ENCODE measurements at regions of chr19 and their contacts with region 1.

Region 1: DNA sequence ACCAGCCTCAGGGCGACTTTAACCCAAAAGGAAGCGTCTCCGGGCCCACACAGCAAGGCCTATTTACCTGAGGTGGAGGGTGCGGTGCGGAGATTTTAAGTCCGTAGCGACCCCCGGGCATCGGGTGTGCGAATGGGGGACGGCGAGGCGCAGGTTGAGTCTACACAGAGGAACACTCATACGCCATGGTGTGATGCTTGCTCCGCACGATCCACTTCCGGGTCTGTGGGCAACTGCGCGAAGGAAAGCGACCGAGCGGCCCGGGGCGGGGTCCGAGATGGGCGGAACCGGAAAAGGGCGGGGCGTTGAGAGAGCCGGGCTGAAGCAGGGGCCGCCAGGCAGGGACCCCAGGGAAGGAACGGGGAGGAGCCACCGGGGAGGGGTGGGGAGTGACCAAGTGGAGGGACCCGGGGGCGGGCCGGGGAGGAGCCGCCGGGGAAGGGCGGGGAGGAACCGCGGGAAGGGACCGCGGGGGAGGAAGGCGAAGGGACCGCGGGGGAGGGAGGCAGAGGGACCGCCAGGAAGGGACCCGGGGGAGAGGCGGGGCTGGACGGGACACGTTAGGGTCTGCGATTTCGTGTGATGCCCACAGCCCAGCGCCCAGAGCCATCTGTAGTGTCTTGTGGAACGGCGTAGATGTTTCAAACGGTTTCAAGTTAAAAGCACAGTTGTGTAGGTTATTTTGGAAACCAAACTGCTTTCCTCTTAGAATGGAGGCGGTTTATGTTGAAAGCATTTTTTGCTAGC is at the start of gene ZNF160:
- DNase-seq: peak; percentile 95 to 99 (median 97)
- ATAC-seq: peak; percentile 99
- H3K4me3 ChIP-seq: peak within 1 kb of the TSS; percentile 99
- H3K4me3 Mint-ChIP-seq: peak within 1 kb of the TSS; percentile 85 to 97 (median 88)
- H3K27ac ChIP-seq: peak within 1 kb of the TSS; percentile 89
- H3K27ac Mint-ChIP-seq: peak within 1 kb of the TSS; percentile 79 to 98 (median 94)
- H3K4me1 ChIP-seq: peaks cover 13 to 15% of the 10 kb centered on the region in 2 donors
- H3K4me1 Mint-ChIP-seq: peaks cover 22 to 37% (median 34%) of the 10 kb centered on the region in 7 donors
- H3K27me3 ChIP-seq: no peaks in the 10 kb centered on the region
- H3K27me3 Mint-ChIP-seq: no peaks in the 10 kb centered on the region
- total RNA-seq, gene ZNF160: 39.1 to 75.3 (median 52.9) TPM

Region 2: DNA sequence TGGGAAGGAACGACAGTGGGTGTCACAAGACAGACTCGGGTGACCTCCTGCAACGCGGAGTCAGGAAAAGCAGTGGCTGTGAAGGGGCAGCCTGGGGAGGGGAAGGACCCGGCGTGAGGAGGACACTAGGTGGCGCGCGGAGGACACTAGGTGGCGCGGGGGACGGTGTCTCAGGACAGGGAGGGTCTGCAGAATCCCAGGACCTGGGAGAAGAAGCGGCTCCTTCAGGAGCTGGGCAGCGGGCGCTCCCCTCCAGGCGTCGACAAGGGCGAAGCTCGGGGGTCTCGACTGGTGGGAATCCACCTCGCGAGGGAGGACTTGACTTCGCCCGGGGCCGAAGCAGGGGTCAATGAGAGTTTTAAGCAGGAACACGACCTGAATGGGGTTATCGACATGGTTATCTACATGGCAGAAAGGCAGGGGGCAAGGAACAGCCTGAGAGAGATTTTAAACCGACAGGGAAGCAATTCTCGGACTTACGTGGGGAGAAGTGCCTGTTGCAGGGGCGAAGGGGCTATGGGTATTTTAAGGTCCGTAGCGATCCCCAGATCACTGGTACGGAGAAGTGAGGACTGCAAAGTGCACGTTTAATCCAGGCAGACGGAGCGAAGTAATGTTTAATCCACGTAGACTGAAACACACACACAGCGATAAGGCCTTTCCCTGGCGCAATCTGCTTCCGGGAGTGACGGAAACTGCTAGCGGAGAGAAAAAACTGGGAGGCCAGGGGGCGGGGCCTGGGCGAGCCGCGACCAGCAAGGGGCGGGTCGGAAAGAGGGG is 963.9 kb before region 1 on chr19 and contains the start of gene ZNF616:
- CTCF ChIA-PET with region 1: no interaction called
- POLR2A ChIA-PET with region 1: no interaction called
- intact Hi-C with region 1: loop called in 1 of 2 experiments (anchors 2 kb)
- DNase-seq: peak; percentile 58 to 97 (median 95)
- ATAC-seq: peak; percentile 74
- H3K4me3 ChIP-seq: peak within 1 kb of the TSS; percentile 99
- H3K4me3 Mint-ChIP-seq: peak within 1 kb of the TSS; percentile 92 to 99 (median 96)
- H3K27ac ChIP-seq: peak within 1 kb of the TSS; percentile 89
- H3K27ac Mint-ChIP-seq: peak within 1 kb of the TSS; percentile 88 to 98 (median 96)
- H3K4me1 ChIP-seq: peaks cover 15 to 18% of the 10 kb centered on the region in 2 donors
- H3K4me1 Mint-ChIP-seq: peaks cover 20 to 44% (median 33%) of the 10 kb centered on the region in 7 donors
- H3K27me3 ChIP-seq: no peaks in the 10 kb centered on the region
- H3K27me3 Mint-ChIP-seq: no peaks in the 10 kb centered on the region
- total RNA-seq, gene ZNF616: 2.8 to 18.5 (median 6.1) TPM

Region 3: DNA sequence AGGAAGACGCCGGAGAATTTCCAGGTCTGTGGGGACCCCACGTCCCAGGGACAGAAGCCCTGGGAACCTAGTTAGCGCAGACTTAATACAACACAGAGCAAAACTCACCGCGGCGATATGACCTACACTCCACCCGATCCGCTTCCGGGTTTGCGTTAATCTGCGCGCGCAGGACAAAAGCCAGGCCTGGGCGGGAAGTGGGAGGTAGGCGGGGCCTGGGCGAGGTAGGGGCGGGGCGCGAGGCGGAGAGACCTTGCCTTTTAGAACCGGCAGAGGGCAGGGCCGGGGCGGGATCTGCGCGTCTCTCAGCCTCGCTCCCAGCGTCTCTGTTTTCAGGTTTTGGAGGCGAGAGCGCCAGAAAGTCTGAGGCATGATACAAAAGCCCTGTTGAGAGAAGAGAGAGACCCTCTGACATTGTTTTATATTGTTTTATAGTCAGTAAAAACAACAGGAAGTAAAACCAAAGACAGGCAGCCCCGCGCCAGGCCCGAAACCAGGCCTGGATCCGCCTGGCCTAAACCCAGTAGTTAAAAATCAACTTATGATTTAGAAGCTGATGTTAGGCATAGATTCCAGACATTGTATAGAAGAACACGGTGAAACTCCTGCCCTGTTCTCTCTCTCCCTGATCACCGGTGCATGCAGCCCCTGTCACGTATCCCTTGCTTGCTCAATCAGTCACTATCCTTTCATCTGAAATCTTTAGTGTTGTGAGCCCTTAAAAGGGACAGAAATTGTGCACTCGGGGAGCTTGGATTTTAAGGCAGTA is 368.3 kb before region 1 on chr19 and contains the start of gene ZNF611:
- CTCF ChIA-PET with region 1: no interaction called
- POLR2A ChIA-PET with region 1: no interaction called
- intact Hi-C with region 1: loop called (anchors 1 to 2 kb)
- DNase-seq: peak; percentile 97 to 100 (median 98)
- ATAC-seq: peak; percentile 98
- H3K4me3 ChIP-seq: peak within 1 kb of the TSS; percentile 99
- H3K4me3 Mint-ChIP-seq: peak within 1 kb of the TSS; percentile 85 to 96 (median 93)
- H3K27ac ChIP-seq: peak within 1 kb of the TSS; percentile 95
- H3K27ac Mint-ChIP-seq: peak within 1 kb of the TSS; percentile 92 to 98 (median 95)
- H3K4me1 ChIP-seq: peaks cover 0 to 8% of the 10 kb centered on the region in 2 donors
- H3K4me1 Mint-ChIP-seq: peaks cover 14 to 32% (median 24%) of the 10 kb centered on the region in 7 donors
- H3K27me3 ChIP-seq: no peaks in the 10 kb centered on the region
- H3K27me3 Mint-ChIP-seq: no peaks in the 10 kb centered on the region
- total RNA-seq, gene ZNF611: 23.4 to 56.0 (median 36.8) TPM

Region 4: GRCh38 chr19:52993323-52994178 is 109.8 kb before region 1 on chr19:
- CTCF ChIA-PET with region 1: no interaction called
- POLR2A ChIA-PET with region 1: no interaction called
- intact Hi-C with region 1: loop called (anchors 1 kb)
- DNase-seq: peak; percentile 49 to 85 (median 81)
- ATAC-seq: peak; percentile 100
- H3K4me3 ChIP-seq: peak overlapping the region; percentile 60
- H3K4me3 Mint-ChIP-seq: peak overlapping the region; percentile 56 to 92 (median 86)
- H3K27ac ChIP-seq: no peak overlapping the region
- H3K27ac Mint-ChIP-seq: peak overlapping the region in 5 of 9 donors; percentile 25 to 83 (median 54)
- H3K4me1 ChIP-seq: peaks cover 0 to 6% of the 10 kb centered on the region in 2 donors
- H3K4me1 Mint-ChIP-seq: peaks cover 8 to 26% (median 14%) of the 10 kb centered on the region in 7 donors
- H3K27me3 ChIP-seq: no peaks in the 10 kb centered on the region
- H3K27me3 Mint-ChIP-seq: peaks cover 0 to 23% (median 14%) of the 10 kb centered on the region in 5 donors

Region 5: GRCh38 chr19:53057904-53058580 is 45.3 kb before region 1 on chr19:
- CTCF ChIA-PET with region 1: no interaction called
- POLR2A ChIA-PET with region 1: no interaction called
- intact Hi-C with region 1: no loop called
- DNase-seq: no peak
- ATAC-seq: no peak
- H3K4me3 ChIP-seq: no peak overlapping the region
- H3K4me3 Mint-ChIP-seq: peak overlapping the region in 4 of 10 donors; percentile 12 to 68 (median 29)
- H3K27ac ChIP-seq: no peak overlapping the region
- H3K27ac Mint-ChIP-seq: no peak overlapping the region
- H3K4me1 ChIP-seq: no peaks in the 10 kb centered on the region
- H3K4me1 Mint-ChIP-seq: peaks cover 0 to 8% (median 0%) of the 10 kb centered on the region in 7 donors
- H3K27me3 ChIP-seq: no peaks in the 10 kb centered on the region
- H3K27me3 Mint-ChIP-seq: peaks cover 3 to 14% (median 8%) of the 10 kb centered on the region in 5 donors

Region 6: DNA sequence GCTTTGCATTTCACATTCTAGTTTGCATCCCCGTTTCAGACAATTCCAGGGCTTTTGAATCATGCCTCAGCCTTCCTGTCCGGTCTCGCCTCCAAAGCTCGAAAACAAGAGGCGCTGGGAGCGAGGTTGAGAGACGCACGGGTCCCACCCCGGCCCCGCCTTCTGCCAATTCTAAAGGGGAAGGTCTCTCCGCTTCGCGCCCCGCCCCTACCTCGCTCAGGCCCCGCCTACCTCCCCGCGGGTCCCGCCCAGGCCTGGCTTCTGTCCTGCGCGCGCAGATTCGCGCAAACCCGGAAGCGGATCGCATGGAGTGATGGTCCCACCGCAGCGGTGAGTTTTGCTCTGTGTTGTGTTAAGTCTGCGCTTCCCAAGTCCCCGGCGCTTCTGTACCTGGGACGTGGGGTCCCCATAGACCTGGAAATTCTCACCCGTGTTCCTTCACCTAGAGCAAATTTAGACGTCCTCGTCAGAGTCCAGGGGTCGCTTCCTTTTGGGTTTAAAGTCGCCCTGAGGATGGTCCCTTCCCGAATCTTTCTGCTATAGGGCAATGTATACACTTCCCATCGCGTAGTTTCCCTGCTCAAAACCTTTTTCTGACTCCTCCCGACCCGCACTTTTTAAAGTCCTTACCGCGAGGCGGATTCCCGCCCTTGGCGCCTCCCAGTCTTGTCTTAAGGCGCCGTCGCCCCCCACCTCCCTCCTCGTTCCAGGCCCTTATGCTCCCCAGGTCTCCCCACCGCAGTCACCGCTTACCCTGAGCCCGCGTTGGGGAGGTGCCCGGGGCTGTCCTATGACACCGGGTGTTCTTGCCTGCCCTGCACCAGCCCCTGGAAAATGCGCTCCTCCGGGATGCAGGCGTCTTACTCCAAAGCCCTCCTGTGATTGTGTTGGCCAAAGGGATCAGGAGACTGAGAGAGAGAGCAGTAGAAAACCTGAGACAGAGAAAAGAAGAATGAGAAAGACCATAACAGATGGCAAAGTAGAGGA is 230.4 kb after region 1 on chr19 and contains the start of gene ZNF845:
- CTCF ChIA-PET with region 1: no interaction called
- POLR2A ChIA-PET with region 1: no interaction called
- intact Hi-C with region 1: loop called (anchors 1 kb)
- DNase-seq: peak; percentile 91 to 99 (median 97)
- ATAC-seq: peak; percentile 99
- H3K4me3 ChIP-seq: peak within 1 kb of the TSS; percentile 93
- H3K4me3 Mint-ChIP-seq: peak within 1 kb of the TSS; percentile 87 to 97 (median 94)
- H3K27ac ChIP-seq: peak within 1 kb of the TSS; percentile 74
- H3K27ac Mint-ChIP-seq: peak within 1 kb of the TSS; percentile 87 to 97 (median 89)
- H3K4me1 ChIP-seq: peaks cover 0 to 5% of the 10 kb centered on the region in 2 donors
- H3K4me1 Mint-ChIP-seq: peaks cover 14 to 43% (median 22%) of the 10 kb centered on the region in 7 donors
- H3K27me3 ChIP-seq: no peaks in the 10 kb centered on the region
- H3K27me3 Mint-ChIP-seq: peaks cover 0 to 8% (median 6%) of the 10 kb centered on the region in 5 donors
- total RNA-seq, gene ZNF845: 4.6 to 18.9 (median 11.1) TPM

Region 7: DNA sequence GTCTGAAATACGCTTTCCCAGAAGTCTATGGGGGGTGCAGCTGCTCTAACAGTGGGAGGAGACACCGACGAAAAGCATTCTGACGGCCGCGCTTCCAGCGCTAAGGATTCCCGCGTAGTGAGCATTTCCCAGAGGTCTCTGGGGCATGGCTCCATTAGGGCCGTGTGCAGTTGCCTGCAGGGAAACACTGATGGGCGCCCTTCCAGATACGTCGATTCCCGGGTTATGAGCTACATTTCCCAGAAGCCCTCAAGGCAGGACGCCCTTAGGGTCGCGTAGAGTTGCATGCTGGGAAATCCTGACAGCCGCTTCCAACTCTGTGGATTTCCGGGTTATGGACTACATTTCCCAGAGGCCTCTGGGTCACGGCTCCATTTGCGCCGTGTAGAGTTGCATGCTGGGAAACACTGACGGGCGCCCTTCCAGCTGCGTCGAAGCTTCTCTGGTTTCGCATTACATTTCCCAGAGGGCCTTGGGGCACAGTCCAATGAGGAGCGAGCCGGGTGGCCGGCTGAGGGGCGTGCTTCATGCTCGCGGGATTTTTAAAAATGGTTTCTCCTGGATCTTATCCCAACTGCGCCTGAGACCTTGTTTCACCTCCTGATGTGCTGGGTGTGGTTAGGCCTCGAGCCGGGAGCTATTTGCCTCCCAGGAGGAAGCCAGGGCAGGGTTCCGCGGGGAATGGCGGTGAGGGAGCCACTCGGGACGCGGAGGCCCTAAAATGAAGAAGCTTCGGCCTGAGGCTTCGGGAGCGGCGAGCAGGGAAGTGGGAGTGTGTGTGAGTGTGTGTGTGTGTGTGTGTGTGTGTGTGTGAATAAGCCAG is 417.4 kb after region 1 on chr19:
- CTCF ChIA-PET with region 1: no interaction called
- POLR2A ChIA-PET with region 1: interaction called, 3 read pairs
- intact Hi-C with region 1: loop called (anchors 1 to 2 kb)
- DNase-seq: peak; percentile 65 to 93 (median 89)
- ATAC-seq: peak; percentile 100
- H3K4me3 ChIP-seq: peak overlapping the region; percentile 99
- H3K4me3 Mint-ChIP-seq: peak overlapping the region; percentile 94 to 99 (median 98)
- H3K27ac ChIP-seq: peak overlapping the region; percentile 69
- H3K27ac Mint-ChIP-seq: peak overlapping the region; percentile 84 to 96 (median 94)
- H3K4me1 ChIP-seq: peaks cover 9 to 10% of the 10 kb centered on the region in 2 donors
- H3K4me1 Mint-ChIP-seq: peaks cover 10 to 27% (median 18%) of the 10 kb centered on the region in 7 donors
- H3K27me3 ChIP-seq: no peaks in the 10 kb centered on the region
- H3K27me3 Mint-ChIP-seq: no peaks in the 10 kb centered on the region